Activated CD8-positive, alpha-beta memory T cell treated with anti-CD3 and anti-CD28 coated beads, Interleukin-2, amount 10 ng/mL, durations not matched to agents 7 days and 5 days (primary cell): ENCODE measurements at regions of chr5 and their contacts with region 1.

Region 1: GRCh38 chr5:98796197-98796972 is 22.9 kb downstream of the RGMB start:
- DNase-seq: peak; percentile 54
- ATAC-seq: no peak
- H3K4me3 Mint-ChIP-seq: no peak overlapping the region
- H3K27ac Mint-ChIP-seq: no peak overlapping the region
- H3K4me1 Mint-ChIP-seq: no peaks in the 10 kb centered on the region
- H3K27me3 Mint-ChIP-seq: no peaks in the 10 kb centered on the region

Region 2: GRCh38 chr5:98780390-98780789 is 16.0 kb before region 1 on chr5:
- CTCF ChIA-PET with region 1: interaction called, 13 read pairs
- DNase-seq: no peak
- ATAC-seq: no peak
- H3K4me3 Mint-ChIP-seq: no peak overlapping the region
- H3K27ac Mint-ChIP-seq: no peak overlapping the region
- H3K4me1 Mint-ChIP-seq: peaks cover under 1% of the 10 kb centered on the region
- H3K27me3 Mint-ChIP-seq: peaks cover 18% of the 10 kb centered on the region

Region 3: DNA sequence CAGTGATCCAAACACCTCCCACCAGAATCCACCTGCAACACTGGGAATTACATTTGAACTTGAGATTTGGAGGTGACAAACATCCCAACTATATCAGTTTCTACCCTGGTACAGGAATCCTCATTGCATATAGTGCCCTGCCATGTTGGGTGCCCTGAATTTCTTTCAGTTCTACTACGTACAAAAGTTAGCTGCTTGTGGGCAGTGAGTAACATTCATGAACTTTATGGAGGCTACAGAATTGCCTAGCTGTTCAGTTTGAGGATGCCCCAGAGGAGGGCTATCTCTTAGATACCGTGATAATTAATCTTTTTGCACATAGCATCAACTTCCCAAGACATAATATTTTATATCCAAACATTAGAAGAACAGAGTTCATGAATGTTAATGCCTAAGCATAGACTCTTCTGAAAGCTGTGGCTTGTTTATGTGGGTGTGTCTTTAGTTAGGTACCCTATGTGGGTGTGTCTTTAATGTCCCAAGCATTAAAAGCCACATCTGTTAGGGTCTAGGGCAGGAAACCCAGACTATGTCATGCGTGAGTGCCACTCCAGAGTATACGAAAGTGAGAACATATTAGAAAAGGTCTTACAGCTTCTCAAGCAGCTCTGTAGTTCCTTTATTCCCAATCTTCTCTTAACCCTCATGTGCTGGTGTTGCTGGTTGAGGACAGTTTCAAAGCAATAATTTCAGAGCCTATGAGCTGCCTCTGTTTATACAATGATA is 179.5 kb after region 1 on chr5:
- CTCF ChIA-PET with region 1: no interaction called
- DNase-seq: no peak
- ATAC-seq: no peak
- H3K4me3 Mint-ChIP-seq: no peak overlapping the region
- H3K27ac Mint-ChIP-seq: no peak overlapping the region
- H3K4me1 Mint-ChIP-seq: peaks cover 8% of the 10 kb centered on the region
- H3K27me3 Mint-ChIP-seq: no peaks in the 10 kb centered on the region

Region 4: GRCh38 chr5:99141534-99142128 is 345.2 kb after region 1 on chr5:
- CTCF ChIA-PET with region 1: no interaction called
- DNase-seq: no peak
- ATAC-seq: no peak
- H3K4me3 Mint-ChIP-seq: no peak overlapping the region
- H3K27ac Mint-ChIP-seq: no peak overlapping the region
- H3K4me1 Mint-ChIP-seq: no peaks in the 10 kb centered on the region
- H3K27me3 Mint-ChIP-seq: no peaks in the 10 kb centered on the region